AG04449 (cell line): ENCODE measurements at regions of chr10 and their contacts with region 1.

Region 1: DNA sequence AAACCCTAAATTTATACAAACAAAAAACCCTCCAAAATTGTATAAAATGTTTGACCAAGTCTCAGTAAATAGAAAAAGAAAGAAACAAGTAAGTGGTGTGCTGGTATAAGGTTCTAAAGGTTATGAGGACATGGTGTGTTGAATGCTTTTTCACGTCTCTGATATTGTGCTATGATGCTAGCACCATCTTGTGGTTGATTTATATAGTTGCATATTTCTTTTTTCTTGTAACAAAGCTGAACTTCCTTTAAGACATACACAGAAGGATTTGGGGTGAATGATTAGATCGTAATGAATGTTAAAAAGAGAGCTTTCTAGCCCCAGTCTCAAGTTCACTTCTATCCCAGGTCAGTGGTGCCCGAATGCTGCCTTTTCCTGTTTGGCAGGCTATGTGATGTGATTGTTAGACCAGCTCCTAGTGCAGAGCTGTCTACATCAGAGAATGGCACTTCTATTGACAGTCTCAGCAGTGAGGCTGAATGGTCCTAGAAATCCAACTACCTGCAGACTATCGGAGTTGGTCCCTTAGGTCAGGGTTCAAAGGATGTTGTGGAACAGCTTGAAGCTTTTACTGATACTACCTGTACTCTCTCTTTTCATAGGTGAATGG is 25.0 kb downstream of the VTI1A start:
- DNase-seq: no peak
- H3K4me3 ChIP-seq: no peak overlapping the region
- CTCF ChIP-seq: peak; percentile 38

Region 2: DNA sequence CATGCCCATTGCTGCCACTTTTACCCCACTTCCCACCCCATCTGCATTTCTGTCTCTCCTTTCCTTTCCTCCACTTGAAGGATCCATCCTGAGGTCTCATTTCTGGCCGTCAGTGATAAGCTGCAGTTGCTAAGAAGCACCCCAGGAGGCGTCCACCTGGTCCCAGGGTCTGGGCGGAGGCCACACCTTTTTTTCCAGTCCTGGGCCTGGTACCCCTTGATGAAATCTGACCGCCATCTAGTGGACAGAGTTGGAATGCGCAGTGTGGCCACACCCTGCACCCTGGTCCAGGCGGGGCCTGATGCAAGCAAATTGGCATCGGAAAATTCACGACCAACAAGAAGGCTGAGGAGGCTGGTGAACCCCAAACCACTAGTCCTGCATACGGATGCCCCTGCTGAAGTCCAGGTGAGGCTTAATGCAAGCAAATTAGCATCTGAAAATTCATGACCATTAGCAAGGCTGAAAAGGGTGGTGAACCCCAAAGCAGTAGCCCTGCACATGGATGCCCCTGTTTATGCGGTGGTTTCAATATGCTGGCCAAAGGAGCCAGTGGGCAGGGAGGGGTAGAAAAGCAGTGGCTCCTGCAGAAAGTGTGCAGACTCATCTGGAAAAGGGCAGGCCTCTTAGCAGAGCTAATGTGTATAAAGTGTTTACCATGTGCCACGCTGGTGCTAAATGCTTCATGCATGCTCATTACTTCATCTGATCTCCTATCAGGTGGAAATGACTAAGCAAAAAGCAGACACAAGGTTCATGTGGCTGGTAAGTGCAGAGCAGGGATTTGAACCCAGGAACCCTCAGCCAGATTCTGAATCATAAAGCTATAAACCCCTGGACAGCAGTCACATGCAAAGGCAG is 331.6 kb before region 1 on chr10:
- CTCF ChIA-PET with region 1: interaction called, 11 read pairs
- POLR2A ChIA-PET with region 1: no interaction called
- DNase-seq: no peak
- H3K4me3 ChIP-seq: no peak overlapping the region
- CTCF ChIP-seq: peak; percentile 87

Region 3: GRCh38 chr10:112389147-112389822 is 82.7 kb before region 1 on chr10:
- CTCF ChIA-PET with region 1: no interaction called
- POLR2A ChIA-PET with region 1: no interaction called
- DNase-seq: no peak
- H3K4me3 ChIP-seq: no peak overlapping the region
- CTCF ChIP-seq: no peak

Region 4: DNA sequence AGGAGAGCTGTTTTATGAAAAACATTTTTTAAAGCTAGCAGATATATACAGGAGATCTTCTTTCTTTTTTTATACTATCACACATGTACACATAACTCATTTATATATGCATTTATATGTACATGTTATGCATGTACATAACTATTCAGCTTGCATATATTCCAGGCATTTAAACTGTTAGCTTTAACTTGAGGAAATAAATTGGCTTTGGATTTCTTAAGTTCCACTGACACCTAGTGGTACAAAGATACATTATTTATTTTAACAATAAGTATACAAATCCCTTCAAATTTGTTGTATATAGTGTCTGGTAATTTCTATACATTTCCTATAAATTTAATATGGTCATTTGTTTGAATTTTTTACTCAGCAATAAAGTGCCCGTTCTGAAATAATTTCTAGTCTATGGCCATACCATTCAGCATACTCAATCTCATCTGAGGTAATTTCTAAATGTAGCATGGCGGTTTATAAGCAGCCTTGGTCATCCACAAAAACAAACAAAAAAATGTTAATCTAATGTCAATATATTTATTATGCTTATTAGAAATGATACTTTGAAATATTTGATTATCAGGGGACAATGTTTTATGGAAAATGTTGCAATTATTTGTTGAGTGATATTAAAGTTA is 36.9 kb before region 1 on chr10:
- CTCF ChIA-PET with region 1: interaction called, 19 read pairs
- POLR2A ChIA-PET with region 1: no interaction called
- DNase-seq: no peak
- H3K4me3 ChIP-seq: no peak overlapping the region
- CTCF ChIP-seq: peak; percentile 11

Region 5: DNA sequence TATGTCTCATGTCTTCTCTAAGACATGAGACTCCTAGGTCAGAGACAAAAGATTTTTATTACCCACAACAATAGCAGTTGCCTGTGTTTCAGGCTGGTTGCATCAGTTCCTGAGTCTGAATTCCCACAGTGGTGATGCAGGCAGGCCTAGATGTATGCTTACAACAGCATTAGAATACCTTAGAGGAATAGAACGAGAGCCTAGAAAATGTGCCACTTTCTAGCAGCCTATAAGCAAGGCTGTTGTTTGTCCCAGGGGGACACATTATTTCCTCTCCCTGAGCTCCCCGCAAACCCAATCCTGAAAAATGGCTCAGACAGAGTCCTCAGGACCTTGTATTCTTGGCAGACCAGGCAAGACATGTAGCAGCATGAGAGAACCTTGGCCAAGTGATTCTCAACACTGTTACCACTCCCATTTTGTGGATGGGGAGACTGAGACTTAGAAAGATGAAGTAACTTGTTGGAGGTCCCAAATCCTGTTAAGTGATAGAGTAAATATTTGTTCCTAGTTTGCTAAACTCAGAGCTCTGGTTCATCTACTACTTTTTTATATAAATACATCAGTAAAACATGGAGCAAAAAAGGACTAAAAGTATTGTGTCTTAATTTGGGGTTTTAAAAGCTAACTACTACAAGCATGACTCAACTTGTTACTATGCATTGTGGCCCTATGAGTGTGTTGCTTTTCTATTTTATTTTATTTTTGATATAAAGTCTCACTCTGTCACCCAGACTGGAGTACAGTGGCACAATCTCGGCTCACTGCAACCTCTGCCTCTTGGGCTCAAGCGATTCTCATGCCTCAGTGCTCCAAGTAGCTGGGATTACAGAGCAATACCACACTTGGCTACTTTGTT is 10.7 kb before region 1 on chr10:
- CTCF ChIA-PET with region 1: interaction called, 96 read pairs
- POLR2A ChIA-PET with region 1: no interaction called
- DNase-seq: peak; percentile 46
- H3K4me3 ChIP-seq: no peak overlapping the region
- CTCF ChIP-seq: no peak

Region 6: GRCh38 chr10:112958275-112958995 is 486.5 kb after region 1 on chr10:
- CTCF ChIA-PET with region 1: interaction called, 10 read pairs
- POLR2A ChIA-PET with region 1: no interaction called
- DNase-seq: peak; percentile 89
- H3K4me3 ChIP-seq: peak overlapping the region; percentile 23
- CTCF ChIP-seq: no peak

Region 7: DNA sequence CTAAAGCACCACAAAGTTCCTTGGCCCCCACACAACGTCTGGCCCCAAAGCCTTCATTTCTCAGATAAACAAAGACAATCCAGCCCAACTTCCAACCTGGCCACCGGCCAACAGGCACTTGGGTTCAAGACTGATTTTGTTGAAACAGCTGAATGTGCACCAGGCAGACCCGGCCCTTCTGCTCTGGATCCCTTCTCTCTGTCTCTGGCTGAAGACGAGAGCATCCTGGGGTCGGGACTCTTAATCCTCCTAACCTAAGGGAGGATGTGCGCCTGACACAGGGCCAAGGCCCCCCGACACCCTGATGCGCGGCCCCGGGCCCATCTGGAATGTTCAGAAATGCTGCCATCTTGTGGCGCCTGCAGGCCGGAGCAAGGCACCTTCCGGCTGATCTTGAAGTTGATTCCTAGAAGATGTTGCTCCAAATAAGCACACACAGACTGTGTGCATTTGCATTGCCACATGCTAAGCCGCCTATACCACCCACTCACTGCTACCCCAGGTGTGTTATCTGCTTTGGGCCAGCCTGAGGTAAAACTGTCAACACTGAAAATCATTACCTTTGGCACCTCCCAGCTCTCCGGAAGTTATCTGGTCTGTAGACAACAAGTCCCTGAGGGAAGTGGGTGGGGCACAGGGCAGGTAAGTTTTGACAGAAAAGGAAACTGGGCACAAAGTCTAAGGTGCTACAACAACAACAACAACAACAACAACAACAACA is 982.5 kb after region 1 on chr10:
- CTCF ChIA-PET with region 1: interaction called, 19 read pairs
- POLR2A ChIA-PET with region 1: no interaction called
- DNase-seq: no peak
- H3K4me3 ChIP-seq: no peak overlapping the region; the same call in 1 of the 2 replicates
- CTCF ChIP-seq: peak; percentile 79